ENCODE measurements at regions of chr9 and their contacts with region 1.

Region 1: GRCh38 chr9:95268681-95269080 is 48.8 kb downstream of the FANCC start:
- DNase-seq: peak; percentile 2
- H3K4me3 Mint-ChIP-seq: no peak overlapping the region
- H3K27ac Mint-ChIP-seq: no peak overlapping the region
- H3K4me1 Mint-ChIP-seq: peaks cover 62% of the 10 kb centered on the region
- H3K27me3 Mint-ChIP-seq: peaks cover 2% of the 10 kb centered on the region

Region 2: DNA sequence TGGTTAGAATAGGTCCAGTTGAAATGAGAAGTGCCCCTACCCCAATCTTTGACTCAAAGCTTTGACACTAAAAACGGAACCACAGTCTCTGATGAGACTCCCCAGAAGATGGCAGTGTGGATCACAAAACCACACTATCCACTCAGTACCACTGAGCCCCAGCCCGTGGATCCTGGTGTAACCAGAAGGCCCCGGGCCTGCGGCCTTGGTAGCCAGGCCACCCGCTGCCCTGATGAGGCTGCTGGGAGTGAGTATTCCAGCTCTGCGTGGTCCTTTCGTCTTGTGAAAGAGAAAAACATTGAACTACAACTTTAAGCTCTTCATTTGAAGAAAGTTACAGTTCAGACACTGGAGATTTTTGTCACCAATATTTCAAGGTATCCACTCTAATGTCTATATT is 587.2 kb before region 1 on chr9:
- intact Hi-C with region 1: loop called (anchors 1 kb)
- DNase-seq: peak; percentile 43
- H3K4me3 Mint-ChIP-seq: no peak overlapping the region
- H3K27ac Mint-ChIP-seq: no peak overlapping the region
- H3K4me1 Mint-ChIP-seq: no peaks in the 10 kb centered on the region
- H3K27me3 Mint-ChIP-seq: peaks cover 27% of the 10 kb centered on the region

Region 3: GRCh38 chr9:94783102-94783664 is 485.5 kb before region 1 on chr9:
- intact Hi-C with region 1: loop called (anchors 2 kb)
- DNase-seq: peak; percentile 11
- H3K4me3 Mint-ChIP-seq: no peak overlapping the region
- H3K27ac Mint-ChIP-seq: no peak overlapping the region
- H3K4me1 Mint-ChIP-seq: peaks cover 20% of the 10 kb centered on the region
- H3K27me3 Mint-ChIP-seq: no peaks in the 10 kb centered on the region

Region 4: DNA sequence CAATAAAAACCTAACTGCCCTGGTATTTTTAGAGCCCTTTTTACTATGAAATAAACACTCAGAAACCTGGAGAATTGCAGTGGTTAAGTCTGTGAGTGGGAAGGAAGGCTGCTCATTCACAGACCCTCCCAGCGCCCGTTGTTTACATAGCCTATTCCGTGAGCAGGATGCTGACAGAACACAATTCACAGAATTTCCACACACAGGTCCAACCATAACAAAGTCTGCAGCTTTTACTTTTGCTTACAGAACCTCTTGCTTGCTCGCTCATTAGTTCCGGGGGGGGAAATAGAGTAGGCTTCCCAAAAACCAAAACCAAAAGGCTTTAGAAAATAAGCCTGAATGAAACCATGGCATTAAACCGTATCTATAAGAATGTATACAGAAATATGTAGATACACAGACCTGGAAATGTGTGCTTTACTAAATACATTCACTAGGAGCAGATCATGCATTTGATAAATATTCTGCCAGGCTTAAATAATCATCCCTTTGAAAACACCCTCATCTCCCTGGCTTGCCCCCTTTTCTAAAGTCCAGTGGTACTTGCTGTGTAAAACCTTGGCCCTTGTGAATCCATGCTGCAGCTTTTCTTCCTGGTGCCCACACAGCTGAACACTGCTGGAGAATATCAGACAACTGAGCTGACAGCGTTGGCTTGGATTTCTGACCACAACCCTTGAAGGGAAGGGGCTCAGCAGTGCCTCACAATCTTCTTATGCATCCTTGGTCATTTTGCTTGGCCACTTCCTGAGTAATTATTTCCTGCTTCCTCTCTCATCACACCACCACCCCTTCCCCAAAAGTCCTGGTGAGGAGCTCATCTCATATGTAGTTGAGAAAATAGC is 79.2 kb before region 1 on chr9:
- intact Hi-C with region 1: loop called (anchors 5 kb)
- DNase-seq: peak; percentile 49
- H3K4me3 Mint-ChIP-seq: peak overlapping the region; percentile 67
- H3K27ac Mint-ChIP-seq: peak overlapping the region; percentile 83
- H3K4me1 Mint-ChIP-seq: peaks cover 51% of the 10 kb centered on the region
- H3K27me3 Mint-ChIP-seq: no peaks in the 10 kb centered on the region

Region 5: DNA sequence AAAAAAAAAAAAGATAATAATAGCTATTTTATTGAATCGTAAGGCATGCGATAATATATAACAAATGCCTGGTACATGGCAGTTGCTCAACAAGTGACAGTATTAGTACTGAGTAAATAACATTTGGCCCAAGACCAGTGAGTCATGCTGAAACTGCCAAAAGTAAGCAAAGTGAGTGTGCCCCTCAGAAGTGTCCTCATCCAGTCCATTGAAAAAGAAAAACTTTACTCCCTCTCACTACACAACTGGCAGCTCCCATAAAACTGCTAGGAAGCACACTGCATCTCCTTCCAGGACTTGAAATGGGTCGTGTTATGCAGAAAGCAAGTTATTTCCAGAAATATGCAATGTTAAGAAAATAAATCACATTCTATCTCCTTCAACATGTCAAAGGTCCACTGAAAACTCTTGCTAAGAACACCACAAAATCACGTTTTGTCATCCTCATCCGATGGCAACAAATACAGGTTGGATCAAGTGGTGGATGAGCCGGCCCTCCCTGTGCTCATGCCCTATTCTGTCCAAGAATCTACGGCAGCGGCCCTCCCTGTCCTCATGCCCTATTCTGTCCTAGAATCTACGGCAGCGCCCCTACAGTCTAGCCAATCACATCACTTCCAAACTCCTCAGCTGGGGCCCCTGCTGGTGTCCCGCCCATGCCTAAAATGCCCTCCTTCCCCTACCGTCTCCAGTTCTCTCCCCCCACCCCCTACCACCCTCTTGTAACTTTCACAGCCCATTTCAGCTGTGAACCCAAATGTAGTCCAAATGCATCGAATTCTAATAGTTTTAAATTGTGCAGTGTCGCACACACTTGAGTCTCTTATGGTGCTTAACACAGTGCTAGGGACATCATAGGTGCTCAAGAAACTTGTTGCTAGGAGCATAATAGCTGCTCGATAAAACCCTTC is 235.6 kb after region 1 on chr9:
- intact Hi-C with region 1: no loop called
- DNase-seq: no peak
- H3K4me3 Mint-ChIP-seq: peak overlapping the region; percentile 79
- H3K27ac Mint-ChIP-seq: no peak overlapping the region
- H3K4me1 Mint-ChIP-seq: peaks cover 25% of the 10 kb centered on the region
- H3K27me3 Mint-ChIP-seq: peaks cover 62% of the 10 kb centered on the region